ENCODE measurements at regions of chr17 and their contacts with region 1.

Region 1: GRCh38 chr17:76567634-76568432 is 17.8 kb downstream of the ST6GALNAC2 start:
- DNase-seq: no peak
- H3K4me3 ChIP-seq: no peak overlapping the region
- CTCF ChIP-seq: no peak

Region 2: GRCh38 chr17:76578344-76578979 is 10.6 kb after region 1 on chr17:
- CTCF ChIA-PET with region 1: interaction called, 14 read pairs
- POLR2A ChIA-PET with region 1: no interaction called
- DNase-seq: no peak
- H3K4me3 ChIP-seq: no peak overlapping the region
- CTCF ChIP-seq: no peak

Region 3: DNA sequence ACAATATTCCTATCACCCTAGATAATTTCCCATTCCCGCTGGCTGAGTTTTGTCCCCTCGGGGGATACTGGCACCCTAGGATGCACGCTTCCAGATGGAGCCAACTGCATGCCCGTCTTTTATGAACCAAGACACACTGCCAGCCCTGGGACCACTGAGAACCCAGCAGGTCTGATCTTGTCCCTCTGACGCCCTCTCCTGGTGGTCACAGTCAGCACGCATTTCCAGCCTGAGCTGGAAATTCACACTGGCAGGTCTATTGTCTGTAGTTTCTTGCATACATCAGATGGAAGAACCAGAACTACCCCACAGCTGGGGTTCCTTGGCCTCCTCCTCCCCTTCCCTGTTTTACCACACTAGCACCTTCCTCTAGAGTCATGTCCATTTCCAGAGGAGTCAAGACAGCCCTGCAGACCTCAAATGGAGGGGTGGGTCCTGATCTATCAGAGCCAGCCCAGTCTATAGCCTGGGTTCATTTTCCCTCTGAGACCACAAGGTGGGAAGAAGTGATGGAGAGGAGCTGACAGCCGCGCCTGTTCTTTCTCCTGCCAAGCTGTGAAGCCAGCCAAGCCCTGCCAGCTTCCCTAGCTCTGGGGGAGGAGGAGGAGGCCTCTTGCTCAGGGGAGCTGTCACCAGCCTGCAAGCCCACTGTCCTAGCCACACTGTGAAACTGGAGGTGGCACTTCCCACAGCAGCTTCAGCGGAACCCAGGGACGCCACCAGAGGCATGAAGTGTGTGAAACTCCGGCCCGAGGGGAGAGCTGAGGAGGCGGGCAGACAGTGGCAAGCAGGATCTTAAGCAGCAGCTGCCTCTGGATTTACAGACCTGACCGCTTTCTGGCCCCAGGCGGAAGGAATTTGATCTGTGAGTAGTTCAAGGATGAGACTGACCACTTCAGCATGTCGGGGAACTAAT is 113.6 kb after region 1 on chr17:
- CTCF ChIA-PET with region 1: no interaction called
- POLR2A ChIA-PET with region 1: no interaction called
- DNase-seq: no peak
- H3K4me3 ChIP-seq: no peak overlapping the region
- CTCF ChIP-seq: peak; percentile 76

Measured in AG04449 (cell line).